ENCODE measurements at regions of chr1 and their contacts with region 1.

Region 1: GRCh38 chr1:156456622-156457465 is 43.7 kb downstream of the MEF2D start:
- DNase-seq: peak; percentile 99
- H3K4me3 ChIP-seq: peak overlapping the region; percentile 30 to 56 (median 44)
- H3K27ac ChIP-seq: peak overlapping the region; percentile 94 to 99 (median 97)
- H3K4me1 ChIP-seq: peaks cover 0 to 22% (median 14%) of the 10 kb centered on the region in 4 donors
- H3K27me3 ChIP-seq: no peaks in the 10 kb centered on the region
- CTCF ChIP-seq: peak in 1 of 5 experiments; percentile 16
- EP300 ChIP-seq: peak; percentile 97
- POLR2A ChIP-seq: peak; percentile 92

Region 2: GRCh38 chr1:156500797-156501499 is 44.1 kb after region 1 on chr1:
- in situ Hi-C with region 1: loop called in 1 of 4 experiments (anchors 5 kb)
- intact Hi-C with region 1: loop called (anchors 2 kb)
- DNase-seq: peak; percentile 96
- H3K4me3 ChIP-seq: peak overlapping the region; percentile 78 to 98 (median 92)
- H3K27ac ChIP-seq: peak overlapping the region; percentile 99 to 100 (median 100)
- H3K4me1 ChIP-seq: peaks cover 59 to 79% (median 72%) of the 10 kb centered on the region in 4 donors
- H3K27me3 ChIP-seq: no peaks in the 10 kb centered on the region
- CTCF ChIP-seq: peak; percentile 35 to 73 (median 56)
- EP300 ChIP-seq: peak; percentile 23
- POLR2A ChIP-seq: peak; percentile 97

Region 3: GRCh38 chr1:157069601-157070000 is 612.8 kb after region 1 on chr1:
- in situ Hi-C with region 1: no loop called
- intact Hi-C with region 1: no loop called
- DNase-seq: no peak
- H3K4me3 ChIP-seq: no peak overlapping the region
- H3K27ac ChIP-seq: no peak overlapping the region
- H3K4me1 ChIP-seq: peaks cover 2 to 9% (median 5%) of the 10 kb centered on the region in 4 donors
- H3K27me3 ChIP-seq: peaks cover 7% of the 10 kb centered on the region
- CTCF ChIP-seq: no peak
- EP300 ChIP-seq: no peak
- POLR2A ChIP-seq: no peak

Region 4: DNA sequence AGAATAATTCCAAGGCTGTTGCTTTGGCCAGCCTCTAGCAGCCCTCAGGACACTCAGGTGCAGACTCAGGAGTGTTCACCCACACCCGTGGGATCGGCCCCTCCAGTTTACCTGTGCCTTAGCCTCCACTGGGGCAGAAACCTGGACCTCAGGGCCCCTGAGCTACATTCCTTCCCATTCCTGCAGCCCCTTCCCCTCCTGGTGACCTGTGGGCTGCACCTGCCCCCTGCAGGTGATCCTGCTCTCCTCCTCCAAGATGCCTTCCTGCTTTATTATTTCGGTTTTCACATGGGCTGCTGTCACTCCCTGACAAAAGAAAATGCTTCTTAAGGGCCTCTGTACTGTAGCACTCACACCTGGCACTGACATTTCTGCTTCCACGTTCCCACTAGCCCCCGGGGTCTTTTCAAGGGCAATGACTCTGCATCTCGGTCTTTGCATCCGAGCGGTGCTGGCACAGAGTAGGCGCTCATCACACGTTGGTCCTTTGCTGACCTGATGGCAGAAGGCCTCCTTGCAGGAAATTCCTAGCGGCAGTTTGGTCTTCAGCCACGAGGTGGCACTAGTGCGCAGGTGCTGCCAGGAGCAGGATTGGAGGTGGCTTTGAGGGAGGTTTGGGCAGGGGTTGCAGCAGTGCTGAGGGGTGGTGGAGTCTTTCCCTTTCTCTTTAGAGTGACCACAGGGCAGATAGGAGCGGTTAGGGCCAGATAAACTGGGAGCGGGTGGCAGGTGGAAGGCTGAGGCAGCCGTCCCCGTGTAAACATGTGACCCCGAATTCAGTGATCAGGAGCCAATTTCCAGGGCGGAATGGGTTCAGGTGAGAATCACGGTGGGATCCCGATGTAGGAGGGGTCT is 706.7 kb after region 1 on chr1:
- in situ Hi-C with region 1: no loop called
- intact Hi-C with region 1: no loop called
- DNase-seq: peak; percentile 80
- H3K4me3 ChIP-seq: no peak overlapping the region
- H3K27ac ChIP-seq: no peak overlapping the region
- H3K4me1 ChIP-seq: no peaks in the 10 kb centered on the region
- H3K27me3 ChIP-seq: peaks cover 5% of the 10 kb centered on the region
- CTCF ChIP-seq: peak; percentile 65 to 94 (median 92)
- EP300 ChIP-seq: no peak
- POLR2A ChIP-seq: no peak

Measured in transverse colon (tissue), 4 donors.